ENCODE measurements at regions of chr15 and their contacts with region 1.

Region 1: GRCh38 chr15:56496635-56497034 is 31.7 kb upstream of the MNS1 start:
- DNase-seq: peak; percentile 88
- H3K4me3 ChIP-seq: no peak overlapping the region
- H3K27ac ChIP-seq: no peak overlapping the region
- H3K4me1 ChIP-seq: peaks cover 8% of the 10 kb centered on the region
- CTCF ChIP-seq: peak; percentile 98

Region 2: DNA sequence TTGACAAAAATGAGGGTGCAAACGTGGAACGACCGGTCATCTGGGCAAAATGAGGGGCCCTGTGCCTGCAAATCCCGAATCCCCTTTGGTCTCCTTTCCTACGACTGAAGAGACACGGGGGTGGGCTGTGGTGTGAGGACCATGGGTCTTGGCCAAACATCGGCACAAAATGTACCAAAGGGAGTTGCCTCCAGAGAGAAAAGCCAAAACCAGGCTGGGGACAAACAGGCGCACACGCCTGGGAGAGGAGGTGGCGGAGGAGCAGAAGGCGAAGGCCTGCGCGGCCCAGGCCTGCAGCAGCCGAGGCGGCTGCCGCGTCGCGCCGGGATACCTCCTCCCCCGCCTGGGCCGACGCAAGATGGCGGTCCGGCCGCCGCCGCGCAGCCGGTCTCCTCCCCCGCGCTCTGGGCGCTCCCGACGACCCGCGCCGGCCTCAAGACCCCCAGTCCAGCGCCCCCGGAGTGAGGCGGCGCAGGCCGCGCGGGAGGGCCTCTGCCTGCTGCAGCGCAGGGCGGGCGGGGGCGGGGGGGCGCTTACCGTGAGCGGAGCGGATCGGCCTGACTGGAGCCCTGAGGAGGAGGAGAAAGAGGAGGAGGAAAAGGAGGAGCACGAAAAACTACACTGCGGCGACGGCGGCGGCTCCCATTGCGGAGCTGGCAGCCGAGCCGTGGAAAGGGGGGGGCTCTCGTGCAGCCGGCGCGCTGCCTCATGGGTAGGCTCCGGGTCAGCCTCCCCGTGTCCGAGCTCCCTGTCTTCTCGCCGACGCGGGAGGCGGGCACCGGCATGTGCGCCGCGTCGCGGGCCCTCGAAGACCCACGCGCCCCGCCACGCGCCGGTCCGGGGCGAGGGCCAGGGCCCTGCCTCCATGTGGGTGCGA is 236.5 kb after region 1 on chr15 and contains the start of gene ZNF280D:
- CTCF ChIA-PET with region 1: no interaction called
- POLR2A ChIA-PET with region 1: no interaction called
- intact Hi-C with region 1: loop called (anchors 2 kb)
- DNase-seq: peak; percentile 73
- H3K4me3 ChIP-seq: peak within 1 kb of the TSS; percentile 74
- H3K27ac ChIP-seq: peak within 1 kb of the TSS; percentile 60
- H3K4me1 ChIP-seq: peaks cover 26% of the 10 kb centered on the region
- CTCF ChIP-seq: no peak
- total RNA-seq, gene ZNF280D: 7.1 and 10.7 TPM in 2 replicates

Region 3: DNA sequence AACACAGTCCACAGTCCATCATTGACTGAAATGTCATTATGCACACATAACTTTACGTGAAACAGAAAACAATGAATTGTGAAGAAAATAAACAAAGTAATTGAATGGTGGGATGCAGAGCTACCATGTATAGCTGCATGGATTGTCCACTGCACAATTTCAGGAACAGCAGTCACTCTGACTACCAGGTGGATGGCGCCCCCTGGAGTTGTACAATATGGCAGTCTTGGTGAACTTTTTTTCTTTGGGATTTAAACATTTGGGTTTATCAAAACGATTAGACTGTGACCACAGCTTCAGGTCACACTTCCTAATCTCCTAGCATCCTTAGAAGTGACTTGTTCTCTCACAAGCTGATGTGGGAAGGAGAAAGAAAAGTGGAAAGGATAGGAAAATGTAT is 372.9 kb after region 1 on chr15:
- CTCF ChIA-PET with region 1: no interaction called
- POLR2A ChIA-PET with region 1: no interaction called
- intact Hi-C with region 1: loop called (anchors 2 kb)
- DNase-seq: peak; percentile 29
- H3K4me3 ChIP-seq: no peak overlapping the region
- H3K27ac ChIP-seq: no peak overlapping the region
- H3K4me1 ChIP-seq: no peaks in the 10 kb centered on the region
- CTCF ChIP-seq: peak; percentile 80

Measured in OCI-LY7 (cell line).